ENCODE measurements at regions of chr1 and their contacts with region 1.

Region 1: DNA sequence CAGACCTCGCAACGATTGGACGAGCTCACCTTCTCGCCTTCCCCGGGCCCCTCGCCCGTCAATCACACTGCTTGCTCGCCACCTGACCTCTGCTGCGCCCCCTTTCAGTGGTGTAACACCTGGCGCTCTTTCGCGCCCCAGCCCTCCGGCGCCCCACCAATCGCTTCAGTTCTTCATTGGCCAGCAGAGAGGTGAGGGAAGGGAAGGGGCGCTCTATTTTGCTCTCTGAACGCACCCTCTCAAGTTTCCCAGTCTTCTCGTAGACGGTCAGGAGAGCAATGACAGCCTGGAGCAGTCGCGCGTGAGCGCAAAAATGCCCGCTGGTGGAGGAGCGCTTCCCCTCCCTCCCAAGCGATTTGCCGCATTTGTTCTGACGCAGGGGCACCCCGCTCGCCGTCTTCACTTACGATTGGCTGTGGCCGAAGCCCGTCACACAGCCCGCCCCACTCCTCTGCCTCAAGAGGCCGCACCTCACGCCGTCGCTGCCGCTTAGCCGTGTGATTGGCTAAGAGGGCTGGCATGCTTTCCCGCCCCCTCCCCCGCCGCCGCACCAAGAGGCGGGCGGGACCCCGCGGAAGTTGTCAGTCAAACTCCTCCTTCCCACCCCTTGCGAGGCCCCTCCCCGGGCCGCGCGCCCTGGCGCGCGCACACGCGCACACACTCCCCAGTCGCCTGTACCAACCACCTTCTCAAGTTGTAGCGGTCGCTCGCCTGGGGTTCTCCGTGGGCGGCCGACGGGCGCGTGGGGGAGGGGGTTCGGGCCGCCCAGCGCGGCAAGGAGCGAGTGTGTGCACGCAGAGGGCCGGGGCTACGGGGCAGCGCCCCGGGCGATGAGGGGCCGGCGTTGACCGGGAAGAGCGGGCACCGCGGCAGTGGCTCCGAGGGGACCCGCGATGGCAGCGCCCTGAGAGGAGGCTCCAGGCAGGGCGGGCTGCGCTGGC is at the start of gene PPP2R5A:
- DNase-seq: peak; percentile 98
- ATAC-seq: peak; percentile 92
- H3K4me3 Mint-ChIP-seq: peak within 1 kb of the TSS; percentile 92
- H3K27ac Mint-ChIP-seq: peak within 1 kb of the TSS; percentile 93
- H3K4me1 Mint-ChIP-seq: peaks cover 26% of the 10 kb centered on the region
- H3K27me3 Mint-ChIP-seq: no peaks in the 10 kb centered on the region
- total RNA-seq, gene PPP2R5A: 58.8 to 60.0 TPM

Region 2: DNA sequence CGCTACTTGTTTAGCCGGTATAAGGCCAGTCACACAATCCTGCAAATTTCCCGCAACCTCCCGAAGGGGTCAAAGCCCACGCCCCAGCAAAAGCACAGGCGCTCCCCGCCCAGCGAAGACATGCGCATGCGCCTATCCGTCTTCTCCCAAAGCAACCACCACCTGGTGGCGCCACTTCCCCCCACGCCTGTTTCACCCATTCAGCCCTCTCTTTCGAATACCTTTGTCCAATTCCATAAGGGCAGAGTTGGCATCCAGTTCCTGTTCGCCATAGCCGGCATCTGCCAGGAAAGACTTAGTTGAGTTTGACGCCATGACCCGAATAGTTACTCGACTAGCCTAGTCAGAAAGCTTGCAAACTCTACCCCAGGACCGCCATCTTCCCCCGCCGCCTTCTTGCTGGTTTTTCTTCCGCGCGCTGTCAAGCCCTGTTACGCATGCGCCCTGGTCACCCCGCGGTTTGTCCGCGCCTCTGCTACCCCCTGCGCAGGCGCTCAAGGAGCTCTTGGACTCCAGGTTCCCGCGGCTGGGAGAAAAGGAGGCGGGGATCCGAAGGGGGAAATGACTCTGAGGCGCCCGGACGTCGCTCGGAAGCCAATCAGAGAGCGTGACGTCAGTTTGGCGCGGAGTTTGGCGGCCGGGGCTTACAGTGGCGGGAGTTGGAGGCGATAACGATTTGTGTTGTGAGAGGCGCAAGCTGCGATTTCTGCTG is 249.7 kb before region 1 on chr1 and contains the starts of genes DTL and INTS7:
- POLR2A ChIA-PET with region 1: interaction called, 20 read pairs
- DNase-seq: peak; percentile 97
- ATAC-seq: peak; percentile 92
- H3K4me3 Mint-ChIP-seq: peak within 1 kb of the TSS; percentile 90
- H3K27ac Mint-ChIP-seq: peak within 1 kb of the TSS; percentile 93
- H3K4me1 Mint-ChIP-seq: peaks cover 52% of the 10 kb centered on the region
- H3K27me3 Mint-ChIP-seq: no peaks in the 10 kb centered on the region
- total RNA-seq, gene DTL: 49.7 to 54.7 TPM
- total RNA-seq, gene INTS7: 22.6 to 23.0 TPM

Region 3: GRCh38 chr1:212162635-212163034 is 122.4 kb before region 1 on chr1:
- POLR2A ChIA-PET with region 1: interaction called, 11 read pairs
- DNase-seq: no peak
- ATAC-seq: peak; percentile 41
- H3K4me3 Mint-ChIP-seq: peak overlapping the region; percentile 50
- H3K27ac Mint-ChIP-seq: peak overlapping the region; percentile 63
- H3K4me1 Mint-ChIP-seq: peaks cover 25% of the 10 kb centered on the region
- H3K27me3 Mint-ChIP-seq: no peaks in the 10 kb centered on the region

Region 4: DNA sequence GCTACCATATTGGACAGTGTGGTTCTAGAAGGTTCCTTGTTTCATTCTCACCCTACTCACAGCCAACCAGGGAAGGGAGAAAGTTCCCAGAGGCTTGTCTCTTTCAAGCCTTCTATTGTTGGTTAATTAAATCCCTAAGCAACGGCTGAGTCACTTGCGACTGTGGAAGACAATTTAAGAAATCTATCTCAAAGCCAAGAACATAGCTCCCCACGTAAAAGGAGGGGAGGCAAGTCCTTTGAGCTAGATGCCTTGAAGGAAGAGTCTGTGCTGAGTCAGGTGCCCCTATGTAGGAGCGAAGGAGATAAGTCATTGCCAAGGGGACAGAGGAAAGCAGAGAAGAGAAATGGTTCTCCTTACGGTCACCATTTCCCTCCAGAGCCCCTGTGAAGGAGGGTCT is 79.2 kb before region 1 on chr1:
- POLR2A ChIA-PET with region 1: no interaction called
- DNase-seq: no peak
- ATAC-seq: no peak
- H3K4me3 Mint-ChIP-seq: no peak overlapping the region
- H3K27ac Mint-ChIP-seq: no peak overlapping the region
- H3K4me1 Mint-ChIP-seq: no peaks in the 10 kb centered on the region
- H3K27me3 Mint-ChIP-seq: peaks cover 7% of the 10 kb centered on the region

Region 5: DNA sequence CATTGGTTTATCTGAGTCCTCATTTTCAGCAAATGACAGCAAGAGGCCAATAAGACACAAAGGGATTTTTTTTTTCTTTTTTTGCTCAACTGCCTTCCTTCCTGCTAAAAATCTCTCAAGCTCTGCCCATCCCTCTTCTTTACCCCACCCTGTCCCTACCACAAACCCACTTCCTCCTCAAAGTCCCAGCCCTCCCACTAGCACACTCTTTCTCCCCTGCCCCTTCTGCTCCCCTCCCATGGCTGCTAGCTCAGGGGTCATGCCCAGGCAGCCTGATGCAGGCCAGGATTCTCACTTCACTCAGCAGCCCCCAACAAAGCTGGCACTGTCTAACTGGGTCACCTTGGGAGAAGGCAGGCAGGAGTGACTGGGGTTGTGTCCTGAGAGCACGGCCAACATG is 28.6 kb before region 1 on chr1:
- POLR2A ChIA-PET with region 1: interaction called, 44 read pairs
- DNase-seq: peak; percentile 71
- ATAC-seq: peak; percentile 85
- H3K4me3 Mint-ChIP-seq: peak overlapping the region; percentile 68
- H3K27ac Mint-ChIP-seq: peak overlapping the region; percentile 92
- H3K4me1 Mint-ChIP-seq: peaks cover 51% of the 10 kb centered on the region
- H3K27me3 Mint-ChIP-seq: no peaks in the 10 kb centered on the region